Transverse colon (tissue), 4 donors: ENCODE measurements at regions of chr14 and their contacts with region 1.

Region 1: GRCh38 chr14:99982537-99983250 is 82.5 kb upstream of the EVL start:
- DNase-seq: peak; percentile 53
- H3K4me3 ChIP-seq: no peak overlapping the region
- H3K27ac ChIP-seq: no peak overlapping the region
- H3K4me1 ChIP-seq: peaks cover 3 to 37% (median 10%) of the 10 kb centered on the region in 4 donors
- H3K27me3 ChIP-seq: peaks cover 28% of the 10 kb centered on the region
- CTCF ChIP-seq: peak; percentile 83 to 88 (median 87)
- EP300 ChIP-seq: no peak
- POLR2A ChIP-seq: no peak

Region 2: GRCh38 chr14:100108042-100108825 is 125.5 kb after region 1 on chr14:
- in situ Hi-C with region 1: loop called (anchors 10 to 25 kb)
- intact Hi-C with region 1: loop called (anchors 5 kb)
- DNase-seq: peak; percentile 89
- H3K4me3 ChIP-seq: no peak overlapping the region
- H3K27ac ChIP-seq: no peak overlapping the region
- H3K4me1 ChIP-seq: peaks cover 13 to 47% (median 28%) of the 10 kb centered on the region in 4 donors
- H3K27me3 ChIP-seq: no peaks in the 10 kb centered on the region
- CTCF ChIP-seq: peak; percentile 81 to 86 (median 85)
- EP300 ChIP-seq: no peak
- POLR2A ChIP-seq: no peak

Region 3: GRCh38 chr14:100117633-100118395 is 135.1 kb after region 1 on chr14:
- in situ Hi-C with region 1: loop called in 2 of 4 experiments (anchors 10 to 25 kb)
- intact Hi-C with region 1: no loop called
- DNase-seq: peak; percentile 65
- H3K4me3 ChIP-seq: no peak overlapping the region
- H3K27ac ChIP-seq: no peak overlapping the region
- H3K4me1 ChIP-seq: peaks cover 0 to 3% (median 0%) of the 10 kb centered on the region in 4 donors
- H3K27me3 ChIP-seq: no peaks in the 10 kb centered on the region
- CTCF ChIP-seq: no peak
- EP300 ChIP-seq: no peak
- POLR2A ChIP-seq: no peak

Region 4: GRCh38 chr14:100187247-100187833 is 204.6 kb after region 1 on chr14:
- in situ Hi-C with region 1: loop called (anchors 5 to 25 kb)
- intact Hi-C with region 1: loop called (anchors 5 kb)
- DNase-seq: peak; percentile 58
- H3K4me3 ChIP-seq: no peak overlapping the region
- H3K27ac ChIP-seq: peak overlapping the region; percentile 30 to 73 (median 46)
- H3K4me1 ChIP-seq: peaks cover 4 to 33% (median 22%) of the 10 kb centered on the region in 4 donors
- H3K27me3 ChIP-seq: no peaks in the 10 kb centered on the region
- CTCF ChIP-seq: no peak
- EP300 ChIP-seq: no peak
- POLR2A ChIP-seq: no peak

Region 5: GRCh38 chr14:100192672-100193416 is 210.2 kb after region 1 on chr14:
- in situ Hi-C with region 1: loop called (anchors 5 to 25 kb)
- intact Hi-C with region 1: loop called (anchors 5 kb)
- DNase-seq: peak; percentile 100
- H3K4me3 ChIP-seq: peak overlapping the region in 3 of 4 donors; percentile 25 to 52 (median 27)
- H3K27ac ChIP-seq: peak overlapping the region; percentile 85 to 95 (median 89)
- H3K4me1 ChIP-seq: peaks cover 5 to 30% (median 22%) of the 10 kb centered on the region in 4 donors
- H3K27me3 ChIP-seq: no peaks in the 10 kb centered on the region
- CTCF ChIP-seq: peak; percentile 75 to 98 (median 89)
- EP300 ChIP-seq: no peak
- POLR2A ChIP-seq: peak; percentile 33